Activated CD4-positive, alpha-beta T cell treated with anti-CD3 and anti-CD28 coated beads for 36 hours (primary cell): ENCODE measurements at regions of chr20 and their contacts with region 1.

Region 1: DNA sequence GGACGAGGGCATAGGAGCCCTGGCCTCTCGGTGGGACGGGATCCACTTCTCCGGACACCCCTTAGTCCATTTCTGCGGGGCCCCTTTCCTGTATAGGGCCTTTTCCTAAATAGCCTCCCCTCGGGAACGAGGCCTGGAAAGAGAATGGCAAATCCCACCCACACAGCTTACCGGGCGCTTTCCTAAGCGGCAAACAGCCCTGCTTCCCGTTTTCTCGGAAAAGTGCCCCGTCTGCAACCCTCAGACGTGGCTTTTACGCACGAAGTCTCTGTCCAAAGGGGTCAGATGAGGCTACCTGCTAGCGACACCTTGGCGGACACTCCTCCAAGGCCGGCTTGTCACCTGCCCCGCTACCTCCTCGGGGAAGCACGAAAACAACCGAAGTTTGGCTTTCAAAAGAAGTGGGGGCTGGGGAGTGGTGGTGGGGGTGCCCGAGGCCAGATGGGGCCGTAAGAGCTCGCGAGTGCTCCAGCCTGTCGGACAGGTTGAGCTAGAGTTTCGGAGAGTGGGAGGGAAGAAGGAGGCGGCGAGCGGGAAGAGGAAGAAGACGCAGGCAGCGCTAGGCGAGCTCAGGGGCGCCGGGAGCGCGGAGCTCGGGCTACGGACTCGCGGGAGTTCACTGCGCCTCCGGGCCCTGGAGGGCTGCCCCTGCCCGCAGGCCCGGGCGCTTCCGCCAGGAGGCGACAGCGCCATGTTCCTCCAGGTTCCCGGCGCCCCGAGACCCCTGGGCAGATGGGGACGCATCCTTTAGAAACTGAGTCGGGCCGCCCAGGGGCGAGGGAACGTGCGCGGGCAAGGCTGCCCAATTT is 768 bp downstream of the TFAP2C start:
- DNase-seq: peak; percentile 55
- ATAC-seq: peak; percentile 50
- H3K4me3 Mint-ChIP-seq: peak overlapping the region; percentile 19
- H3K27ac Mint-ChIP-seq: no peak overlapping the region
- H3K4me1 Mint-ChIP-seq: peaks cover 14% of the 10 kb centered on the region
- H3K27me3 Mint-ChIP-seq: peaks cover 59% of the 10 kb centered on the region

Region 2: DNA sequence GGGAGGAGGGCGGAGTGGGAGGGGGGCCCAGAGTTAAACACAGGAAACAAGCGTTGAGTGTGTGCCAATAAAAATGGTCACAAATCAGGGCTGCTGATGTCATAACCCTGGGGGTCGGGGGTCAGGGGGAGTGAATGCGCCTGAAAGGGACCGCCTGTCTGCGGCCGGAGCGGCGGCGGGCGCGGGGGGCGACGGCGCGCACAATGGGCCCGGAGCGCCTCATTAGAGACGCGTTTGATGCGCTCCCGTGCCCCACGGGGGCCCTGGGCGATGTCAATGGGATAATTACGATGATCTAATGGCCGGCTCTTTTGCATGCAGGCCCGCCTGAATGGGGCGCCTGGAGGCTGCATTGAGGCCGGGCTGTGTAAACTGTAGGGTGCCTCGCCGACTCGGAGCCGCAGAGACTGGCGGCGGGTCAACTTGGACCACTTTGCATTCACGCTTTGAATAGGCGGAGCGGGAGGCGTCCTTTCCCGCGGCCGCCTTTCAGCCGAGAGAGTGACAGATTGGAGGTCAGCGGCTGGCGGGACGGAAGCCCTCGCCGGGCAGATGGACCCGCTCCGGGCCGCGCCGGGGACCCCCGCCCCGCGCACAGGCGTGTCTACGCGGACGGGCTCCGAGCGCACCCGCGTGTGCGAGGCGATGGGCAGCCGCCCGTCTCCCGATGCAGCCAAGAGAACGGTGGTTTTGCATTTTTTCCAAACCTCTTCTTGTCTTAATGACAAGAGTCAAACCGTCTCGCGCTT is 295.4 kb after region 1 on chr20:
- CTCF ChIA-PET with region 1: no interaction called
- POLR2A ChIA-PET with region 1: no interaction called
- intact Hi-C with region 1: loop called (anchors 1 to 5 kb)
- DNase-seq: peak; percentile 7
- ATAC-seq: no peak
- H3K4me3 Mint-ChIP-seq: no peak overlapping the region
- H3K27ac Mint-ChIP-seq: no peak overlapping the region
- H3K4me1 Mint-ChIP-seq: peaks cover 7% of the 10 kb centered on the region
- H3K27me3 Mint-ChIP-seq: peaks cover 67% of the 10 kb centered on the region

Region 3: DNA sequence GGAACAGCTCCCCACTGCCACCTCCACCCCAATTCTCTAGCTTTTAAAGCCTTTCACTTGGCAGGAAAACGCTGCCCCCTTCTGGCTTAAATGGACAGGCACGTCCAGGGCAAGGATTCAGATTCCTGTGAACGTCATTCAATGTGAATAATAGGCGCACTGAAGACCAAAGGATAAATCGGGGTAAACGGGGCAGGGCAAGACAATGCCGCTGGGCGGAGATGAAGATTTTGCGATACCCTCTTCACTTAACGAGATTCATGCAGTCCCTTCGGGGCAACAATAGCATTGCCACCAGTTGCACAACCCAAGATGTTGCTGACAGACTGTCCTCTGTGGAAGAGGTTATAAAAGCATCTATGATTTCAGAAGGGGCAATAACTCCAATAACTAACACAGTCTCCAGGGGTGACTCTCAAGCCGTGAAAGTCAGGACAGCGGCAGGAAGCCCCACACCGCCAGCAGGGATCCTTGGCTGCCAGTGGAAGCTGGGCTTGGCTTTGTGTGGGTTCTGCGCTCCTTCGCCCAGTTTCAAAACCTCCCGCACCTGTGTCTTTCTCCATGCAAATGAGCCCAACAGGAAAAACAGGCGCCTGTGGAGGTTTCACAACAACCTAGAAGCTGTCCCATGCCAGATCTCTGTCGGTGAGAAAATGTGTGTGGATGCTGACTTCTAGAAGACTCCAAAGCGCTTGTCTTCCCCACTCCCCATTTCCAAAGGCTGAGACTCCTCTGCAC is 344.8 kb after region 1 on chr20:
- CTCF ChIA-PET with region 1: no interaction called
- POLR2A ChIA-PET with region 1: no interaction called
- intact Hi-C with region 1: loop called in 1 of 2 experiments (anchors 5 kb)
- DNase-seq: peak; percentile 56
- ATAC-seq: no peak
- H3K4me3 Mint-ChIP-seq: no peak overlapping the region
- H3K27ac Mint-ChIP-seq: no peak overlapping the region
- H3K4me1 Mint-ChIP-seq: no peaks in the 10 kb centered on the region
- H3K27me3 Mint-ChIP-seq: peaks cover 36% of the 10 kb centered on the region

Region 4: DNA sequence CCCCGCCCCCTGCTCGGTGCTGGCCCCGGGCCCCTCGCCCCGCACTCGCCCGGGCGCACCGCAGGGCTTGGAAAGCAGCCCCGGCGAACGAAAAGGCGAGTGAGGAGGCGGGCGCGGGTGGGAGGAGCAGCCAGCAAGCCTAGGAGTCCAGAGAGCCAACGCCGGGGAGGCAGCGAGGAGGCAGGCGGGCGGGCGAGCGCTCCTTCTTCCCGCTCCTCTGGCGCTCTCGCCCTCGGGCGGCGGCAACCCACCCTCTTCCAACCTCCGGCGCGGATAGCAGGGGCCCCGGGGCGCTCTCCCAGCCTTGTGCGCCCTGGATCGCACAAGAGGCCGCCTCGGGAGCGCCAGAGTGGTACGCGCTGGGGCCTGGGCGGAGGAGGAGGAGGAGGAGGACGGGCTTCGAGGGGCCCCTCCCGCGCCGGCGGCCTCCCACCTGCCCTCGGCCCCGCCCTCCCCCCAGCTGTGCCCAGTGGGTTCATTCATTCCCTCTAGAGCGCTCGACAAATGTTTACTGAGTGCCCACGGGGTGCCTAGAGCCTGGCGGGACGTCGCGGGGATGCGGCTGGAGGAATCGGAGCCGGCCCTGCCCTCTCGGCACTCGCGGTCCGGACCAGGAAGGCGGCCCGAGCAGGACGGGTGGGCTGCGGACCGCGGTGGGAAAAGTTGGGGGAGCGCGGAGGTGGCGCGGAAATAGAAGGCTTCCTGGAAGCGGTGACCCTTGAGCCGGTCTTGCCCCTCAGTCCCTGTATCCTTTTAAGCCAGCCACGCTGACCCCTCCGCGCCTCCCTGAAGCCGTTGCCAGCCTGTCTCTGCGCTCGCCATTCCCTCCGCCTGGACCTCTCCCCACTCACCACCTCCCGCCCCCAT is 636.6 kb after region 1 on chr20 and contains the start of gene BMP7:
- CTCF ChIA-PET with region 1: no interaction called
- POLR2A ChIA-PET with region 1: no interaction called
- intact Hi-C with region 1: loop called (anchors 2 to 10 kb)
- DNase-seq: no peak
- ATAC-seq: no peak
- H3K4me3 Mint-ChIP-seq: no peak within 1 kb of the TSS
- H3K27ac Mint-ChIP-seq: no peak within 1 kb of the TSS
- H3K4me1 Mint-ChIP-seq: peaks cover 3% of the 10 kb centered on the region
- H3K27me3 Mint-ChIP-seq: peaks cover 62% of the 10 kb centered on the region
- total RNA-seq, gene BMP7: 0.41 TPM in 1 of 2 experiments, not detected in the other